Breast epithelium (tissue), 4 donors: ENCODE measurements at regions of chr17 and their contacts with region 1.

Region 1: DNA sequence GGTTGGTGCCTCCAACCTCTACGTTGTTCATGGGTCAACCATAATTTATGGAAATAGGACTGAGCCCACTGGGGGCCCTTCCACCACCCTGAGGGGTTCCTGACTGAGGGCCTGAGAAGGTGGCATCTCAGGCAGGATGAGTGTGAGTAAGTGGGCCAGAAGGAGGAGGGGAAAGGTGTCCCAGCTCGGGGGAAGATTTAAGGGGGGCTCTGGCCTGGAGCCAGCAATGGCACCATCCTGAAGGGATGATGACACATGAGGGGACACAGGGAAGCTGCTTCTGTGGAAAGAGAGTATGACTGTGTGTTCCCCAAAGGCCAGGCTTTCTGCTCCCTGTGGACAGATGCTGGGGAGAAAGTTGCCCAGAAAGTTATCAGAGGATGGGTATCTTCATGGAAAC is 18.7 kb downstream of the MYL4 start:
- DNase-seq: no peak
- H3K4me3 ChIP-seq: no peak overlapping the region
- H3K27ac ChIP-seq: no peak overlapping the region
- H3K4me1 ChIP-seq: peaks cover 0 to 3% of the 10 kb centered on the region in 2 donors
- H3K27me3 ChIP-seq: no peaks in the 10 kb centered on the region
- CTCF ChIP-seq: no peak
- POLR2A ChIP-seq: no peak

Region 2: DNA sequence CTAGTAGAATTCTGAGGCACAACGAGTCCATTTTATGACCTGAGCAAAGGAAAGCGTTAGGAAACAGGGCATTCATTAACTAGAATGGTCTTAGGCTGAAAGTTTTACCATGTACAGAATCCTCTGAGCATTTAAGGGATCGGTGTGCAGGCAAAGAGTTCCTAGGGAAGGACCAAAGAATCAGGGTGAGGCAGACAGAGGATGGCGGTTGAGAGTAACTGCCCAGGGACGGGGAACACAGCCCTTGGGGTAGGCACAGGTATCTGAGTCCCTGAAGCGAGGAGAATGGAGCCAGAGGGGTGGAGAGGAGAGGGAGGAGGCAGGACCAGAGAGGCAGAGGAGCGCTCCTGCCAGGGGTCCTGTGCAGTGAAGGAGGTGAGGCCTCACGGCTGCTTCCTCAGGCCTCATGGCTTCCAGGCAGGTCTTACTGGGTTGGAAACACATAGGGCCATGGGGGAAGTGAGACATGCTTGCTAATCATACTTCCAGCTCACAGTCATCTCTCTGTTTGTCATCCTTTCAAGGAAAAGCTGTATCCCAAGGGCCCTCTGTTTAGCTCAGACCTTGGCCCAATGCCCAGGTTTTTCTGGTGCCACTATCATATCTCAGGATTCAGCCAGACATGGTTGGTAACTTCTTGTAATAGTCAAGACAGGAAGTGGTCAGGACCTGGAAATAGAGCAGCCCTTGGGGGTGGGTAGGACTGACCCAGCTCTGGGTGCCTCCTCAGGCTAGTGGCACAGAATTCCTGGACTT is 11.9 kb after region 1 on chr17:
- intact Hi-C with region 1: no loop called
- DNase-seq: peak; percentile 67
- H3K4me3 ChIP-seq: no peak overlapping the region
- H3K27ac ChIP-seq: peak overlapping the region; percentile 77 to 95
- H3K4me1 ChIP-seq: peaks cover 0 to 5% of the 10 kb centered on the region in 2 donors
- H3K27me3 ChIP-seq: no peaks in the 10 kb centered on the region
- CTCF ChIP-seq: no peak
- POLR2A ChIP-seq: no peak

Region 3: DNA sequence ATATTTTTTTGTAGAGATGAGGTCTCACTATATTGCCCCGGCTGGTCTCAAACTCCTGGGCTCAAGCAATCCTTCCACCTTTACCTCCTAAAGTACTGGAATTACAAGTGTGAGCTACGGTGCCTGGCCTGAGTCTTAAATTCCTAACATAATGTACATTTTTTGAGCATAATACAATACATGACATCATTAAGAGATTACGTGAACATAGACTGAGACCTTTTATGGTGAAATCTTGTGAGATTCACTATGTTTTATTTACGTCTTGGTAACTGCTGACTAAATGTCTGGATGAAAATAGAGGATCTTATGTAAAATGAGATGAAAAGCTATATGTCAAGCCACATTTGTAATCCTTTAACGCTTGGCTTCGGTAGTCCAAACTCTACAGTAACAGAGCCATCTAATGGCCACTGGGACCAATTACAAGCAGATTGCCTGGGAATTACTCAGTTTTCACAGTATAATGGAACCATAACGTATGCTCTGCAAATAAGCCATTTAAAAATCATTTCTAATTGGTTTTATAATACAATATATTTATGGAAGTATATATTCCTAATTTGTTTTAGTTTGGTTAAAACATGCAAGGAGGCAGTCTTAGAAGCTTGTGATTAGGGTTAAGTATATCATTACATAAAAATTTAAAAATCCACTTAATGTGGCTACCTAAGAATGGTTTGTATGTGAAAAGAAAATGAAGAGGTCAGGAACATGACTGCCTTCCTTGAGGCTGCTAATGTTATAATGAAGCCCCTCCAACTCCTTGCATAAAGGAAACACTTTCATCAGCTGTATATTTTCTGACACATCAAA is 87.8 kb after region 1 on chr17:
- intact Hi-C with region 1: loop called (anchors 1 kb)
- DNase-seq: no peak
- H3K4me3 ChIP-seq: no peak overlapping the region
- H3K27ac ChIP-seq: peak overlapping the region; percentile 4 to 20
- H3K4me1 ChIP-seq: no peaks in the 10 kb centered on the region
- H3K27me3 ChIP-seq: no peaks in the 10 kb centered on the region
- CTCF ChIP-seq: peak; percentile 44 to 88 (median 82)
- POLR2A ChIP-seq: no peak